ENCODE measurements at regions of chr2 and their contacts with region 1.

Region 1: GRCh38 chr2:74548900-74549826 is 4.6 kb downstream of the LOXL3 start:
- DNase-seq: peak; percentile 81
- CTCF ChIP-seq: no peak

Region 2: GRCh38 chr2:74212702-74213410 is 336.3 kb before region 1 on chr2:
- CTCF ChIA-PET with region 1: no interaction called
- POLR2A ChIA-PET with region 1: no interaction called
- DNase-seq: no peak
- CTCF ChIP-seq: no peak

Region 3: DNA sequence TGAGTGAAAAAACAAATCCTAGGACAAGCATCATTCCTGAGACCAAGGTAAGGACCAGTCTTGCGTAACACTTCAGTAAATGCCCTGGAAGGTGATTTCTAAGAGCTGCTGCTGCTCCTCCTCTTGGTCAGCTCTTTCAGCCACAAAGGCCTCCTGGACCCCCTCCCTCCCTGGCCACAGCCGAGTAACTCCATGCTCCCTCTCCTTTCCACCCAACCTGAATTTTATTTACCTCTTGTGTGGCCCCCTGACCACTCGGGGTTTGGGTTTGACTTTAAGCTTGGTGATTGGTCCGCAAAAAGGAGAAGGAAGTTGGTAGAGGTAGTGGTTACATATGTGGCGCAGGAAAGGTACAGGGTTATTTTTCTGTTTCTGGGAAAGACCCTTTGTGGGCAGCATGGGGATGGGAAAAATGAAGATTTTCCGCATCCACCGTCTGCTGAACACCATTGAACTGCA is 10.3 kb before region 1 on chr2:
- CTCF ChIA-PET with region 1: interaction called, 16 read pairs
- POLR2A ChIA-PET with region 1: interaction called, 3 read pairs
- DNase-seq: peak; percentile 53
- CTCF ChIP-seq: no peak